IMR-90 (cell line): ENCODE measurements at regions of chr6 and their contacts with region 1.

Region 1: GRCh38 chr6:29847871-29848630 is 20.4 kb downstream of the HLA-G start:
- DNase-seq: peak; percentile 44
- ATAC-seq: peak; percentile 94
- H3K4me3 ChIP-seq: no peak overlapping the region
- H3K27ac ChIP-seq: no peak overlapping the region
- H3K4me1 ChIP-seq: no peaks in the 10 kb centered on the region; the same call in 1 of the 2 replicates
- H3K27me3 ChIP-seq: peaks cover 32% of the 10 kb centered on the region
- CTCF ChIP-seq: peak; percentile 91
- POLR2A ChIP-seq: peak; percentile 64; the same call in 1 of the 2 replicates
- RAD21 ChIP-seq: peak; percentile 99

Region 2: DNA sequence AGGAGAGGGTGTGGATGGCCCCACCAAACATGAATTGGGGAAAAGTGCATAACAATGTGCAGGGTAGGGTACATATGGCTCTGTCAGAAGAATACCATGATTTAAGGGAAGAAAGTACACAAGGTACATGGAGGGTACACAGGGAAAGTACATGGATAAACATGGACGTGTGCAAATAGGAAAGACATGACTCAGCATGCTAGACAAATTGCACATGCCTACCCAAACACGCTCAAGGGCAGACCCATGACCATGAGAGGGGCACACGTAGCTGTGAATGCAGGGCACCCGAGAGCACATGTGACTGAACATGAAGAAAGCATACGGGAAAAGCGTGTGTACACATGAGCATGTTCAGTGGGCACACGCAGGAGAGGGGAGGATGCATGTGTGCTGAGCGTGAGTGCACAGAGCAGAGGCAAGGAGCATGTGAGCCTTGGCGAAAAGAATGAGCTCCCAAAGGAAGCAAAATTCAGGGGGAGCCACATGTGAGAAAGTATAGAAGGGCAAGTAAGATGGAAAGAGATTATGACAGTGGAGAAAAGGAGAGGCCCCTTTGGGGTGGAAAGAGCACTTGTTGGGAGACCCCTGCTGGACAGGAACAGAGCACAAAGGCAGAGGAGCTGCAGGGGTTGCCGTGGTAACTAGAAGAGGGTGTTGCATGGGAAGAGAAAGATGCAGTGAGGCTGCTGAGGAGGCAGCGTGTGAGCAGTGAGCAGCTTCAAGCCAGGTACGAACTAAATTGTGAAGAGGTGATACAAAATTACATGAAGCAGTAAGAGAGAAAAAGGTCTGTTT is 245.3 kb before region 1 on chr6:
- CTCF ChIA-PET with region 1: no interaction called
- POLR2A ChIA-PET with region 1: no interaction called
- dilution Hi-C with region 1: no loop called
- in situ Hi-C with region 1: no loop called
- intact Hi-C with region 1: no loop called
- DNase-seq: peak; percentile 7
- ATAC-seq: no peak
- H3K4me3 ChIP-seq: no peak overlapping the region
- H3K27ac ChIP-seq: no peak overlapping the region
- H3K4me1 ChIP-seq: no peaks in the 10 kb centered on the region
- H3K27me3 ChIP-seq: no peaks in the 10 kb centered on the region
- CTCF ChIP-seq: peak; percentile 18; the same call in 1 of the 2 replicates
- POLR2A ChIP-seq: no peak
- RAD21 ChIP-seq: no peak

Region 3: DNA sequence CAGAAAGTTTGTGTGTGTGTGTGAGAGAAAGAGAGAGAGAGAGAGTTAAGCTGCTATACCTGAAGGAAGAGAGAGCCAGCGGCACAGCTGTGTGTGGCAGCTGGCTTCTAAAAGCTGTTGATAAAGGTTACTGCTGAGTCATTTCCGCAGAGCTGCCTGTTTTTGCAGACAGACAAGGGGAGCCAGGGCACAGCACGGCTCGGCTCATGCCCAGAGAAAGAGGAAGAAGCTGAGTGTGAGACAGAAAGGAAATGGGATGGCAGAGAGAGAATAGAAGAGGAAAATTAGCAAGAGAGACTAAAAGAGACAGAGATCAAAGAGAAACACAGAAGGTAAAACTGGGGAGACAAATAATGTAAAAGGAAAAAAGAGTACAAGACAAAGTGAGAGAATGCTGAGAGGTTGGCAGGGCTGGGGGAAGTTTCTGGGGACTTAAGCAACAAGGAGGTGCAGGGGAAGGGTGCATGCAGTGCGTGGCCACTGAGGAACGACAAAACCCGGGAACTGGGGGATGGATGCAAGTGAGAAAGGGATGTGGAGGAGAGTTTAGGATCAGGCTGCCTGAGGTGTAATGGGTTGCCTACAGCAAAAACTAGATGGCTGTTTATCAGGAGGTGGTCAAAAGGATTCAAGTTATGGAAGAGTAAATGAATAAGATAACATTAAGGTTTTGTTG is 117.0 kb after region 1 on chr6:
- CTCF ChIA-PET with region 1: interaction called, 3 read pairs
- POLR2A ChIA-PET with region 1: no interaction called
- dilution Hi-C with region 1: no loop called
- in situ Hi-C with region 1: no loop called
- intact Hi-C with region 1: loop called (anchors 1 kb)
- DNase-seq: peak; percentile 91
- ATAC-seq: peak; percentile 89
- H3K4me3 ChIP-seq: peak overlapping the region; percentile 41
- H3K27ac ChIP-seq: peak overlapping the region; percentile 97
- H3K4me1 ChIP-seq: peaks cover 6% of the 10 kb centered on the region; the same call in 1 of the 2 replicates
- H3K27me3 ChIP-seq: no peaks in the 10 kb centered on the region
- CTCF ChIP-seq: no peak
- POLR2A ChIP-seq: no peak
- RAD21 ChIP-seq: no peak

Region 4: DNA sequence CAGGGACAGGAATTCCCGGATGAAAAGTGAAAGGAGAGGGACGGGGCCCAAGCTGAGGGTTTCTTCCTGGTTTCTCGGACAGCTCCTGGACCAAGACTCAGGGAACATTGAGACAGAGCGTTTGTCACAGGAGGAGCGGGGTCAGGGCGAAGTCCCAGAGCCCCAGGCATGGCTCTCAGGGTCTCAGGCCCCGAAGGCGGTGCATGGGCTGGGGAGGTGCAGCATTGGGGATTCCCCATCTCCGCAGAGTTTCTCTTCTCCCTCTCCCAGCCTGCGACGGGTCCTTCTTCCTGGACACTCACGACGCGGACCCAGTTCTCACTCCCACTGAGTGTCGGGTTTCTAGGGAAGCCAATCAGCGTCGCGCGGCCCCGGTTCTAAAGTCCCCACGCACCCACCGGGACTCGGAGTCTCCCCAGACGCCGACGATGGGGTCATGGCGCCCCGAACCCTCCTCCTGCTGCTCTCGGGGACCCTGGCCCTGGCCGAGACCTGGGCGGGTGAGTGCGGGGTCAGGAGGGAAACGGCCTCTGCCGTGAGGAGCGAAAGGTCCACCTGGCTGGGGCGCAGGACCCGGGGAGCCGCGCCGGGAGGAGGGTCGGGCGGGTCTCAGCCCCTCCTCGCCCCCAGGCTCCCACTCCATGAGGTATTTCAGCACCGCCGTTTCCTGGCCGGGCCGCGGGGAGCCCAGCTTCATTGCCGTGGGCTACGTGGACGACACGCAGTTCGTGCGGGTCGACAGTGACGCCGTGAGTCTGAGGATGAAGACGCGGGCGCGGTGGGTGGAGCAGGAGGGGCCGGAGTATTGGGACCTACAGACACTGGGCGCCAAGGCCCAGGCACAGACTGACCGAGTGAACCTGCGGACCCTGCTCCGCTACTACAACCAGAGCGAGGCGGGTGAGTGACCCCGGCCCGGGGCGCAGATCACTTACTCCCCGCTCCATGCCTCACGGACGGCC is 158.4 kb after region 1 on chr6:
- CTCF ChIA-PET with region 1: no interaction called
- POLR2A ChIA-PET with region 1: no interaction called
- dilution Hi-C with region 1: no loop called
- in situ Hi-C with region 1: loop called (anchors 5 kb)
- intact Hi-C with region 1: no loop called
- DNase-seq: peak; percentile 3
- ATAC-seq: peak; percentile 71
- H3K4me3 ChIP-seq: peak overlapping the region; percentile 50
- H3K27ac ChIP-seq: no peak overlapping the region
- H3K4me1 ChIP-seq: no peaks in the 10 kb centered on the region; the same call in 1 of the 2 replicates
- H3K27me3 ChIP-seq: peaks cover 36% of the 10 kb centered on the region
- CTCF ChIP-seq: no peak
- POLR2A ChIP-seq: no peak
- RAD21 ChIP-seq: no peak

Region 5: GRCh38 chr6:30013291-30013922 is 165.4 kb after region 1 on chr6:
- CTCF ChIA-PET with region 1: interaction called, 12 read pairs
- POLR2A ChIA-PET with region 1: no interaction called
- dilution Hi-C with region 1: no loop called
- in situ Hi-C with region 1: loop called (anchors 5 kb)
- intact Hi-C with region 1: loop called (anchors 1 kb)
- DNase-seq: no peak
- ATAC-seq: peak; percentile 64; the same call in 1 of the 2 replicates
- H3K4me3 ChIP-seq: no peak overlapping the region
- H3K27ac ChIP-seq: no peak overlapping the region
- H3K4me1 ChIP-seq: no peaks in the 10 kb centered on the region
- H3K27me3 ChIP-seq: peaks cover 4% of the 10 kb centered on the region
- CTCF ChIP-seq: peak; percentile 70
- POLR2A ChIP-seq: no peak
- RAD21 ChIP-seq: peak; percentile 83

Region 6: DNA sequence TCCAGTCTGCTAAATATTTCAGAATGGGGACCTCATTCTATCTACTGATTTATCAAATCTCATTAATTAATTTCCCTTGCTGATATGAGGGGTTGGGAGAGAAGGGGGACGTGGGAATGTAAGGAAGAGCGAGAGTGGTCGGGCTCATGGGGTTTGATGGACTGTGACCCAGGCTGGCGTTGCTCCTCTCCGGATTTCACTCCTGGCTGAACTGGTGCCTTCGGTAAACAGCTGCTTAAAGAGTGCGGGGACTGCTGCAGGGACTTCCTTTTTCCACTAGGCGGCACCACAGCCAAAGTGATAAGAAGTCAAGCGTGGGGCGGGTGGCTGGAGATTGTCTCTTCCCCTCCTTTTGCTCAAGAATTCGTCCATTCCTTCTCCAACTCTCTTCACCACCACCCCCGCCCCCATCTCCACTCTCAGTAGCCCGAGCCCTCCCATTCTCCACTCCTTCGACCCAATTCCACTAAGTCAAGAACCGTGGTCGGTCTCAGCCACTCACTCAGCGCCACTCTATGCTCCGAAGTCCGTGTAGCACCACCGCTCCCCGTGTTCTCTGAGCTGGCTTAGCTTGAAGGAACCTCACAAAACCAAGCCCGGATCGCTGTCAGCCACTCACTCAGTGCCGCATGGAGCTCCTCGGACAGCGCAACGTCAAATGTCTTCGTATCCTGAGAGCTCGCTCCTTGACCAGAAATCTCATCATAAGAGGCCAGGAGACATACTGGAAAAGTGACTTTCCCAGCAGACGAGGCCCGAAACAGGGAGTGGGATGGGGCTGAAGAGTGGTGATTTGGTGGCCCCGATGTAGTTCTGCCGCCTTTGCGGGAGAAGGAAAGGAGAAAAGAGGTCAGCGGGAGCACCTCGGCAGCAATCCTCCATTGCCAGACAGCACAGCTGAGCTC is 255.2 kb after region 1 on chr6:
- CTCF ChIA-PET with region 1: no interaction called
- POLR2A ChIA-PET with region 1: no interaction called
- dilution Hi-C with region 1: no loop called
- in situ Hi-C with region 1: no loop called
- intact Hi-C with region 1: loop called (anchors 1 kb)
- DNase-seq: peak; percentile 80
- ATAC-seq: peak; percentile 77
- H3K4me3 ChIP-seq: peak overlapping the region; percentile 30
- H3K27ac ChIP-seq: no peak overlapping the region
- H3K4me1 ChIP-seq: peaks cover 6% of the 10 kb centered on the region
- H3K27me3 ChIP-seq: peaks cover 51% of the 10 kb centered on the region
- CTCF ChIP-seq: peak; percentile 94
- POLR2A ChIP-seq: peak; percentile 42; the same call in 1 of the 2 replicates
- RAD21 ChIP-seq: peak; percentile 85

Region 7: GRCh38 chr6:30130887-30131862 is 283.1 kb after region 1 on chr6:
- CTCF ChIA-PET with region 1: interaction called, 3 read pairs
- POLR2A ChIA-PET with region 1: no interaction called
- dilution Hi-C with region 1: no loop called
- in situ Hi-C with region 1: loop called (anchors 10 kb)
- intact Hi-C with region 1: loop called (anchors 1 kb)
- DNase-seq: peak; percentile 85
- ATAC-seq: peak; percentile 96
- H3K4me3 ChIP-seq: no peak overlapping the region
- H3K27ac ChIP-seq: no peak overlapping the region
- H3K4me1 ChIP-seq: no peaks in the 10 kb centered on the region
- H3K27me3 ChIP-seq: peaks cover 48% of the 10 kb centered on the region
- CTCF ChIP-seq: peak; percentile 99
- POLR2A ChIP-seq: no peak
- RAD21 ChIP-seq: peak; percentile 81

Region 8: GRCh38 chr6:30169658-30170614 is 321.9 kb after region 1 on chr6:
- CTCF ChIA-PET with region 1: no interaction called
- POLR2A ChIA-PET with region 1: no interaction called
- dilution Hi-C with region 1: no loop called
- in situ Hi-C with region 1: no loop called
- intact Hi-C with region 1: loop called (anchors 1 kb)
- DNase-seq: peak; percentile 49
- ATAC-seq: peak; percentile 96
- H3K4me3 ChIP-seq: no peak overlapping the region
- H3K27ac ChIP-seq: no peak overlapping the region
- H3K4me1 ChIP-seq: no peaks in the 10 kb centered on the region
- H3K27me3 ChIP-seq: peaks cover 55% of the 10 kb centered on the region
- CTCF ChIP-seq: peak; percentile 76
- POLR2A ChIP-seq: no peak
- RAD21 ChIP-seq: peak; percentile 71